ENCODE measurements at regions of chr2 and their contacts with region 1.

Region 1: GRCh38 chr2:196171248-196171871 is at the start of gene STK17B:
- DNase-seq: peak; percentile 93 to 97 (median 95)
- H3K4me3 ChIP-seq: peak within 1 kb of the TSS; percentile 87 to 88
- H3K4me3 Mint-ChIP-seq: peak within 1 kb of the TSS; percentile 91 to 99 (median 96)
- H3K27ac ChIP-seq: peak within 1 kb of the TSS; percentile 92
- H3K27ac Mint-ChIP-seq: peak within 1 kb of the TSS; percentile 94 to 98 (median 96)
- H3K4me1 ChIP-seq: peaks cover 45% of the 10 kb centered on the region
- H3K4me1 Mint-ChIP-seq: peaks cover 31 to 52% (median 39%) of the 10 kb centered on the region in 4 donors
- H3K27me3 ChIP-seq: no peaks in the 10 kb centered on the region
- H3K27me3 Mint-ChIP-seq: no peaks in the 10 kb centered on the region
- total RNA-seq, gene STK17B: 234 to 243 TPM

Region 2: DNA sequence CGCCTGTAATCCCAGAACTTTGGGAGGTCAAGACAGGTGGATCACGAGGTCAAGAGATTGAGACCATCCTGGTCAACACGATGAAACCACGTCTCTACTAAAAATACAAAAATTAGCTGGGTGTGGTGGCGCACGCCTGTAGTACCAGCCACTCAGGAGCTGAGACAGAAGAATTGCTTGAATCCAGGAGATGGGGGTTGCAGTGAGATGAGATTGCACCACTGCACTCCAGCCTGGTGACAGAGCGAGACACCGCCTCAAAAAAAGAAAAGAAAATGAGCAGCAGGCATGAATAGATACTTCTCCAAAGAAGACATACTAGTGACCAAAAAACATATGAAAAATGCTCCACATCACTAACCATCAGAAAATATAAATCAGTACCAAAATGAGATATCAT is 241.3 kb before region 1 on chr2:
- CTCF ChIA-PET with region 1: no interaction called
- POLR2A ChIA-PET with region 1: no interaction called
- intact Hi-C with region 1: no loop called
- DNase-seq: no peak
- H3K4me3 ChIP-seq: no peak overlapping the region
- H3K4me3 Mint-ChIP-seq: no peak overlapping the region
- H3K27ac ChIP-seq: no peak overlapping the region
- H3K27ac Mint-ChIP-seq: no peak overlapping the region
- H3K4me1 ChIP-seq: no peaks in the 10 kb centered on the region
- H3K4me1 Mint-ChIP-seq: no peaks in the 10 kb centered on the region
- H3K27me3 ChIP-seq: no peaks in the 10 kb centered on the region
- H3K27me3 Mint-ChIP-seq: peaks cover 0 to 3% of the 10 kb centered on the region in 2 donors

Region 3: GRCh38 chr2:196068271-196069209 is 102.8 kb before region 1 on chr2 and contains the start of gene DNAH7:
- CTCF ChIA-PET with region 1: interaction called, 6 read pairs
- POLR2A ChIA-PET with region 1: interaction called, 10 read pairs
- intact Hi-C with region 1: no loop called
- DNase-seq: peak; percentile 92 to 96 (median 92)
- H3K4me3 ChIP-seq: peak within 1 kb of the TSS; percentile 54 to 68
- H3K4me3 Mint-ChIP-seq: peak within 1 kb of the TSS; percentile 84 to 91 (median 86)
- H3K27ac ChIP-seq: peak within 1 kb of the TSS; percentile 27
- H3K27ac Mint-ChIP-seq: peak within 1 kb of the TSS; percentile 81 to 95 (median 86)
- H3K4me1 ChIP-seq: peaks cover 18% of the 10 kb centered on the region
- H3K4me1 Mint-ChIP-seq: peaks cover 5 to 15% (median 8%) of the 10 kb centered on the region in 4 donors
- H3K27me3 ChIP-seq: no peaks in the 10 kb centered on the region
- H3K27me3 Mint-ChIP-seq: peaks cover 1 to 7% of the 10 kb centered on the region in 2 donors
- total RNA-seq, gene DNAH7: not detected

Region 4: DNA sequence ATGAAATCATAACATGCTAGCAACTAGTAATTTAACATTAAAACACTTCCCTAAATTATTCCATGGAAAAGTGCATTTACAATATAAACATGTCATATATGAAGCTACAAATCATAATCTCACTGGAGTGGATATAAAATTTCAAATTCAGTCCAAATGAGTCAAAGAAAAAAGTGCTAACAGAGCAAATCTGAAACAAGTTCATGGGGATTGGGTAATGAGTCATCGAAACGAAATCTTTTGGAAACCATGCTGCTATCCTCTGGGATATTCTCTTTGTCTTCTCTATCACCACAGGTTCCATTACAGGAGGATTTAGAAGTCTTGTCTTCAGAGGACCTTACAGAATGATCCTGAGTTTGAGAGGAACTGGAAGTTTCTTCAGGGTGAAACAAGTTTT is 34.1 kb before region 1 on chr2:
- CTCF ChIA-PET with region 1: interaction called, 4 read pairs
- POLR2A ChIA-PET with region 1: interaction called, 22 read pairs
- intact Hi-C with region 1: loop called (anchors 1 kb)
- DNase-seq: no peak
- H3K4me3 ChIP-seq: no peak overlapping the region
- H3K4me3 Mint-ChIP-seq: peak overlapping the region in 1 of 8 donors; percentile 2
- H3K27ac ChIP-seq: no peak overlapping the region
- H3K27ac Mint-ChIP-seq: peak overlapping the region in 3 of 7 donors; percentile 22 to 72 (median 70)
- H3K4me1 ChIP-seq: peaks cover 29% of the 10 kb centered on the region
- H3K4me1 Mint-ChIP-seq: peaks cover 8 to 39% (median 24%) of the 10 kb centered on the region in 4 donors
- H3K27me3 ChIP-seq: no peaks in the 10 kb centered on the region
- H3K27me3 Mint-ChIP-seq: no peaks in the 10 kb centered on the region

Region 5: GRCh38 chr2:196182439-196183171 is 11.2 kb after region 1 on chr2:
- CTCF ChIA-PET with region 1: interaction called, 19 read pairs
- POLR2A ChIA-PET with region 1: interaction called, 194 read pairs
- intact Hi-C with region 1: loop called (anchors 1 kb)
- DNase-seq: peak in 1 of 5 donors; percentile 53
- H3K4me3 ChIP-seq: peak overlapping the region; percentile 2 to 7
- H3K4me3 Mint-ChIP-seq: peak overlapping the region; percentile 64 to 85 (median 74)
- H3K27ac ChIP-seq: peak overlapping the region; percentile 55
- H3K27ac Mint-ChIP-seq: peak overlapping the region; percentile 91 to 98 (median 95)
- H3K4me1 ChIP-seq: peaks cover 92% of the 10 kb centered on the region
- H3K4me1 Mint-ChIP-seq: peaks cover 65 to 93% (median 80%) of the 10 kb centered on the region in 4 donors
- H3K27me3 ChIP-seq: no peaks in the 10 kb centered on the region
- H3K27me3 Mint-ChIP-seq: no peaks in the 10 kb centered on the region

Region 6: GRCh38 chr2:196205881-196206435 is 34.6 kb after region 1 on chr2:
- CTCF ChIA-PET with region 1: interaction called, 26 read pairs
- POLR2A ChIA-PET with region 1: interaction called, 108 read pairs
- intact Hi-C with region 1: loop called (anchors 1 kb)
- DNase-seq: no peak
- H3K4me3 ChIP-seq: no peak overlapping the region
- H3K4me3 Mint-ChIP-seq: no peak overlapping the region
- H3K27ac ChIP-seq: no peak overlapping the region
- H3K27ac Mint-ChIP-seq: peak overlapping the region in 3 of 7 donors; percentile 14 to 85 (median 24)
- H3K4me1 ChIP-seq: peaks cover 53% of the 10 kb centered on the region
- H3K4me1 Mint-ChIP-seq: peaks cover 46 to 55% (median 49%) of the 10 kb centered on the region in 4 donors
- H3K27me3 ChIP-seq: no peaks in the 10 kb centered on the region
- H3K27me3 Mint-ChIP-seq: no peaks in the 10 kb centered on the region

Region 7: GRCh38 chr2:196239622-196240587 is 68.5 kb after region 1 on chr2:
- CTCF ChIA-PET with region 1: interaction called, 21 read pairs
- POLR2A ChIA-PET with region 1: interaction called, 113 read pairs
- intact Hi-C with region 1: loop called (anchors 1 kb)
- DNase-seq: peak; percentile 84 to 90 (median 87)
- H3K4me3 ChIP-seq: peak overlapping the region in 1 of 2 donors; percentile 44
- H3K4me3 Mint-ChIP-seq: peak overlapping the region; percentile 65 to 82 (median 78)
- H3K27ac ChIP-seq: peak overlapping the region; percentile 56
- H3K27ac Mint-ChIP-seq: peak overlapping the region; percentile 95 to 98 (median 96)
- H3K4me1 ChIP-seq: peaks cover 76% of the 10 kb centered on the region
- H3K4me1 Mint-ChIP-seq: peaks cover 62 to 86% (median 70%) of the 10 kb centered on the region in 4 donors
- H3K27me3 ChIP-seq: no peaks in the 10 kb centered on the region
- H3K27me3 Mint-ChIP-seq: no peaks in the 10 kb centered on the region

Region 8: DNA sequence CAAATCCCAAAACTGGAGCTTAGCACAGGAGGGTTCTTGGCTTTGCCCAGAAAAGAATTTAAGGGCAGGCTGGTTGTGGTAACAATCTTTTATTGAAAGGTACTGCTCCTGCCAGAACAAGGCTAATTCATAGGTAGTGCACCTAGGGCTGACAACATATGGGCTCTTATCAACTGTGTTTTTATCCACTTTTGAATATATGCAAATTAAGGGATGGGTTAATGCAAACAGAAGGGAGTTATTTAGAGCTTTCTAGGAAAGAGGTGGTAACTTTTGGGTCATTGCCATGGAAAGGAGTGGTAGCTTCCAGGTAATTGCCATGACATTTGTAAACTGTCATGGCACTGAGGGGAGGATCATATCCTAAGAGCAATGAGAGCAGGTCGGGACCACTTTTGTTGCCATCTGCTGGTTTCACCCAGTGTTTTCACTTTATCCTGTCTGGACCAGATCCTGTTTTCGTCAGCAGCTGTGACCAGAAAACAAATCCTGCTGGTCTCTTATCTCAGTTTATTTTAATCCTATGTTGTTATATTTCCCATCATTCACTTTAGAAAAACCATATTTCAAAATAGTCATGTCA is 636.8 kb after region 1 on chr2:
- CTCF ChIA-PET with region 1: no interaction called
- POLR2A ChIA-PET with region 1: no interaction called
- intact Hi-C with region 1: no loop called
- DNase-seq: no peak
- H3K4me3 ChIP-seq: no peak overlapping the region
- H3K4me3 Mint-ChIP-seq: no peak overlapping the region
- H3K27ac ChIP-seq: no peak overlapping the region
- H3K27ac Mint-ChIP-seq: no peak overlapping the region
- H3K4me1 ChIP-seq: no peaks in the 10 kb centered on the region
- H3K4me1 Mint-ChIP-seq: no peaks in the 10 kb centered on the region
- H3K27me3 ChIP-seq: peaks cover 5% of the 10 kb centered on the region
- H3K27me3 Mint-ChIP-seq: peaks cover 14 to 33% of the 10 kb centered on the region in 2 donors